Activated CD4-positive, alpha-beta T cell treated with anti-CD3 and anti-CD28 coated beads for 36 hours (primary cell): ENCODE measurements at regions of chr11 and their contacts with region 1.

Region 1: DNA sequence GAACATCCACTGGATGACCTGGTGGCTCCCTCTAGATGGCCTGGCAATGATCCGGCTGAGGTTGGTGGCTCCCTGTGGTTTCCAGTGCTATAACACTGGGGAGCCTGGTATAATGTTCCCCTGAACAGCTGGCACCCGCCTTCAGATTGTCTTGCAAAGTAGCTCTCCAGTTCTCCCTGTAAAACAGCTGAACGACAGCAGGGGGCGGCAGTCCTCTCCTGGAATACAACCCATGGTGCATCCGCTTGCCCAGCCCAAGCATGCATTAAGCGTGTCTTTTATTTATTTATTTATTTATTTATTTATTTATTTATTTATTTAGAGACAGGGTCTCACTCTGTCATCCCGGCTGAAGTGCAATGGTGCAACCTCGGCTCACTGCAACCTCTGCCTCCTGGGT is 258.9 kb downstream of the BUD13 start:
- DNase-seq: peak; percentile 61
- ATAC-seq: no peak
- H3K4me3 Mint-ChIP-seq: no peak overlapping the region
- H3K27ac Mint-ChIP-seq: no peak overlapping the region
- H3K4me1 Mint-ChIP-seq: no peaks in the 10 kb centered on the region
- H3K27me3 Mint-ChIP-seq: peaks cover 20% of the 10 kb centered on the region

Region 2: DNA sequence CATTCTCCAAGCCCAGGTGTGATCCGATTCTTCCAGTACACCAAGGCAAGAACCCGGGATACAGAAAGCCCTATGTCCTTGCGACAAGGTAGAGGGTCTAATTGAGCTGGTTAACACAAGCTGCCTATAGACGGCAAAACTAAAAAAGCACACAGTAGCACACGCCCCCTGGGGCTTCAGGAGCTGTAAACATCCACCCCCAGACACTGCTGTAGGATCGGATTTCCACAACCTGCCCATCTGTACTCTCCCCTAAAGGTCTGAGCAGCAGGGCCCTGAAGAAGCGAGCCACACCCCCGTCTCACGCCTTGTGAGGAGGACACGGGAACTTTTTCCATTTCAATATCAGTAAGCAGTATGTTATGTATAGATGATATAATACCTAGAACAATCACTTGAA is 365.8 kb before region 1 on chr11:
- CTCF ChIA-PET with region 1: no interaction called
- POLR2A ChIA-PET with region 1: no interaction called
- intact Hi-C with region 1: no loop called
- DNase-seq: no peak
- ATAC-seq: no peak
- H3K4me3 Mint-ChIP-seq: no peak overlapping the region
- H3K27ac Mint-ChIP-seq: no peak overlapping the region
- H3K4me1 Mint-ChIP-seq: no peaks in the 10 kb centered on the region
- H3K27me3 Mint-ChIP-seq: peaks cover 10% of the 10 kb centered on the region

Region 3: GRCh38 chr11:116641561-116642045 is 127.7 kb after region 1 on chr11:
- CTCF ChIA-PET with region 1: interaction called, 4 read pairs
- POLR2A ChIA-PET with region 1: no interaction called
- intact Hi-C with region 1: loop called in 1 of 2 experiments (anchors 1 kb)
- DNase-seq: peak; percentile 63
- ATAC-seq: no peak
- H3K4me3 Mint-ChIP-seq: no peak overlapping the region
- H3K27ac Mint-ChIP-seq: no peak overlapping the region
- H3K4me1 Mint-ChIP-seq: no peaks in the 10 kb centered on the region
- H3K27me3 Mint-ChIP-seq: peaks cover 3% of the 10 kb centered on the region

Region 4: DNA sequence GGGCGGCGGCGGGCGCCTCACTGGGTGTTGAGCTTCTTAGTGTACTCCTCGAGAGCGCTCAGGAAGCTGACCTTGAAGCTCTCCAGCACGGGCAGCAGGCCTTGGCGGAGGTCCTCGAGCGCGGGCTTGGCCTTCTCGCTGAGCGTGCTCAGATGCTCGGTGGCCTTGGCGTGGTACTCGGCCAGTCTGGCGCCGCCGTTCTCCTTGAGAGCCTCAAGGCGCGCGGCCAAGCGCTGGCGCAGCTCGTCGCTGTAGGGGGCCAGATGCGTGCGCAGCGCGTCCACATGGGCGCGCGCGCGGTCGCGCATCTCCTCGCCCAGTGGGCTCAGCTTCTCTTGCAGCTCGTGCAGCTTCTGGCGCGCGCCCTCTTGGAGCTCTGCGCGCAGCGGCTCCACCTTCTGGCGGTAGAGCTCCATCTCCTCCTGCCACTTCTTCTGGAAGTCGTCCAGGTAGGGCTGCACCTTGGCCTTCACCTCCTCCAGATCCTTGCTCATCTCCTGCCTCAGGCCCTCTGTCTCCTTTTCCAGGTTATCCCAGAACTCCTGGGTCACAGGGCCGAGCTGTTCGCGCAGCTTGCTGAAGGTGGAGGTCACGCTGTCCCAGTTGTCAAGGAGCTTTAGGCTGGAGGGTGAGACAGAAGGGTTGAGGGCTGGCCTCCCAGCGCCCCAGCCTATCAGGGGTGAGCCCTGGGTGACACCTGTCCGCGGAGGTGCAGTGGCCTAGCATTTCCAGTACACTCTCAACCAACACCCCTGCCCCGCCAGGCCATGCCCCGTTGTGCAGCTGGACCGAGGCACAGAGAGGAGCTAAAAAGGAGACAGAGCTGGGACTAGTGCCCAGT is 322.1 kb after region 1 on chr11:
- CTCF ChIA-PET with region 1: no interaction called
- POLR2A ChIA-PET with region 1: no interaction called
- intact Hi-C with region 1: no loop called
- DNase-seq: peak; percentile 90
- ATAC-seq: peak; percentile 95
- H3K4me3 Mint-ChIP-seq: peak overlapping the region; percentile 59
- H3K27ac Mint-ChIP-seq: peak overlapping the region; percentile 31
- H3K4me1 Mint-ChIP-seq: peaks cover 11% of the 10 kb centered on the region
- H3K27me3 Mint-ChIP-seq: peaks cover 3% of the 10 kb centered on the region